ENCODE measurements at regions of chr3 and their contacts with region 1.

Region 1: DNA sequence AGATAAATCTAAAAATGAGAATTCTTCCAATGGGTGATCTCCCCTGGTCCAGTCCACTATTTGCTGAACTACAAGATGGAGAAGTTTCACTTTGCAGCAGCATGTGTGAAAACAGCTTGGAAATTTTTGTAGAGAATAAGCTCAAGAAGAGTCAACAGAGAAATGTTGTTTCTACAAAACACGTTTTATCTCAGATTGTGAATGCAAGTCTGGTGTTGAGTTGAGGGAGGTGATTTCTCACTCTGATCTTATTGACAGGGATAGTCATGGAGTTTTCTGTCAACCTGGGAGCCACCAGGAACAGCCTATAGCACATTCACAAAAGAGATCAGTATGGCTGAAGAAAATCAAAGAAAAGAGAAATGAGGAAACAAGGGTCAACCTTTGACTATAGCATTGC is 981.2 kb upstream of the CFAP20DC start:
- DNase-seq: no peak
- H3K4me3 Mint-ChIP-seq: no peak overlapping the region
- H3K27ac Mint-ChIP-seq: peak overlapping the region; percentile 70
- H3K4me1 Mint-ChIP-seq: peaks cover 43% of the 10 kb centered on the region
- H3K27me3 Mint-ChIP-seq: no peaks in the 10 kb centered on the region

Region 2: DNA sequence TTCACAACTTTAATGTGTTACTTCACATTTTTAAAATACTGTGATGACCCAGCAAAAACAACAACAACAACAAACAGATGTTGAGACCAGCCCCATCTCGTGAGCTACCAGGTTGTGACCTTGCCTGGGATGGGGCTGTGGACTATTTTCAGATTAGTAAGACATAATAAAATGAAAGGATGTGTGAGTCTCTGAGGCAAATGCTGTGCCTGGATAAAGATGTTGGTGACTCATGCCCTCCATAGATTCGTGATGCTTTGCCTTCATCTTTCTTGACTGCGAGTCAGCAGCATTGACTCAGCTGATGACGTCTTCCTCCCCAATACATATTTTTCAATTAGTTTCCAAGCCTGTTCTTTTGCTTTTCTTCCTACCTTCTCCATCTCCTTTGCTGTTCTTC is 528.2 kb before region 1 on chr3:
- intact Hi-C with region 1: no loop called
- DNase-seq: no peak
- H3K4me3 Mint-ChIP-seq: no peak overlapping the region
- H3K27ac Mint-ChIP-seq: peak overlapping the region; percentile 21
- H3K4me1 Mint-ChIP-seq: peaks cover 16% of the 10 kb centered on the region
- H3K27me3 Mint-ChIP-seq: no peaks in the 10 kb centered on the region

Region 3: GRCh38 chr3:60048447-60048848 is 17.5 kb after region 1 on chr3:
- intact Hi-C with region 1: loop called (anchors 1 kb)
- DNase-seq: peak; percentile 62
- H3K4me3 Mint-ChIP-seq: peak overlapping the region; percentile 74
- H3K27ac Mint-ChIP-seq: peak overlapping the region; percentile 93
- H3K4me1 Mint-ChIP-seq: peaks cover 88% of the 10 kb centered on the region
- H3K27me3 Mint-ChIP-seq: no peaks in the 10 kb centered on the region